Activated T-helper 1 cell treated with anti-CD3 and anti-CD28 coated beads, Interleukin-12 subunit alpha, Interleukin-12 subunit beta, Interleukin-2, Interleukin-4 antibody, amounts not matched to agents 30 ng/mL and 10 ng/mL and 1 ng/mL, durations not matched to agents 14 hours and 24 hours and 36 hours (primary cell): ENCODE measurements at regions of chr1 and their contacts with region 1.

Region 1: GRCh38 chr1:16009030-16009709 is 5.1 kb downstream of the SRARP start:
- DNase-seq: peak; percentile 55
- H3K4me3 Mint-ChIP-seq: no peak overlapping the region
- H3K27ac Mint-ChIP-seq: no peak overlapping the region
- H3K4me1 Mint-ChIP-seq: peaks cover 30% of the 10 kb centered on the region
- H3K27me3 Mint-ChIP-seq: no peaks in the 10 kb centered on the region

Region 2: GRCh38 chr1:15803354-15803753 is 205.8 kb before region 1 on chr1:
- intact Hi-C with region 1: loop called (anchors 2 kb)
- DNase-seq: no peak
- H3K4me3 Mint-ChIP-seq: no peak overlapping the region
- H3K27ac Mint-ChIP-seq: no peak overlapping the region
- H3K4me1 Mint-ChIP-seq: peaks cover 4% of the 10 kb centered on the region
- H3K27me3 Mint-ChIP-seq: peaks cover 15% of the 10 kb centered on the region

Region 3: GRCh38 chr1:15949453-15950245 is 59.5 kb before region 1 on chr1:
- intact Hi-C with region 1: loop called (anchors 2 kb)
- DNase-seq: peak; percentile 53
- H3K4me3 Mint-ChIP-seq: peak overlapping the region; percentile 73
- H3K27ac Mint-ChIP-seq: peak overlapping the region; percentile 98
- H3K4me1 Mint-ChIP-seq: peaks cover 77% of the 10 kb centered on the region
- H3K27me3 Mint-ChIP-seq: no peaks in the 10 kb centered on the region

Region 4: GRCh38 chr1:15985611-15986297 is 23.4 kb before region 1 on chr1:
- intact Hi-C with region 1: no loop called
- DNase-seq: no peak
- H3K4me3 Mint-ChIP-seq: no peak overlapping the region
- H3K27ac Mint-ChIP-seq: no peak overlapping the region
- H3K4me1 Mint-ChIP-seq: peaks cover 20% of the 10 kb centered on the region
- H3K27me3 Mint-ChIP-seq: peaks cover 5% of the 10 kb centered on the region

Region 5: DNA sequence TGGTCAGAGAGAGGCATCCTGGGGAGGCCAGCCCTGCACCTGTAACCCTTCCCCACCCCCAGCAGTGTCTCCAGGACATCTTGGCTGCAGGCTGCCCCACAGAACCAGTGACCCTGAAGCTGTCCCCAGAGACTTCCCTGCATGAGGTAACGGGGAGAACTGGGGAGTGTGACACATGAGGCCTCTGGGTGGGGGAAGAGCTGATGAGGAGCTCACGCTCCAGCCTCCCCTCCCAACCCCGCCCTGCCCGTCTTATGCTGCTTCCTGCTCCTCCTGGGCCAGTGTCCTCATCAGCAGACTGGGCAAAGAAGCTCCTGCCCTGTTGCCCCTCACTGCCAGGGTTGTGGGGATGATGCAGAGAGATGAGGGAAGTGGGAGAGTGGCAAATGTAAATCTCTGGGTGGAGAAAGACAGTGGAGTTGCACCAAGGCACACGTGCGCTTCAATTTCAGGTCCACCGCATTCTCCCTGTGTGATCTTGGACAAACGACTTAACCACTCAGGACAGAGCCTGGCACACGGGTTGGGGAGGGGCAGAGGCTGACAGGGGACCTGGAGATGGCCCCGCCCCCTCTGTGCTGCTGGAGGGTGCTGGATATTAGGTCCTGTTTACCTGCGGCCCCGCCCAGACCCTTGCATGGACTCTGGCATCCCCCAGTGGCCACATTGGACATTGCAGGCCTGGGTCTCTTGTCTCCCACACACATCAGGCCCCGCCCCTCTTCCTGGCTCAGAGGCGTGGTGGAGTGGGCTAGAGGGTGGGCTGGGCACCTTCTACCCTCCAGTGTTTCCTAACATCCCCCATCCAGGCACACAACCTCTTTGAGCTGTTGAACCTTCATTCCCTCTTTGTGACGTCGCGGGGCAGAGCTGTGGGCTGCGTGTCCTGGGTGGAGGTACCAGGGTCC is 46.7 kb after region 1 on chr1:
- intact Hi-C with region 1: loop called (anchors 1 kb)
- DNase-seq: peak; percentile 77
- H3K4me3 Mint-ChIP-seq: no peak overlapping the region
- H3K27ac Mint-ChIP-seq: no peak overlapping the region
- H3K4me1 Mint-ChIP-seq: peaks cover 7% of the 10 kb centered on the region
- H3K27me3 Mint-ChIP-seq: peaks cover 3% of the 10 kb centered on the region